HCT116 (cell line): ENCODE measurements at regions of chr1 and their contacts with region 1.

Region 1: GRCh38 chr1:155084722-155085503 is 6.3 kb downstream of the EFNA3 start:
- DNase-seq: peak; percentile 88
- ATAC-seq: peak; percentile 81
- H3K4me3 ChIP-seq: peak overlapping the region; percentile 61 to 67
- H3K27ac ChIP-seq: peak overlapping the region; percentile 67
- H3K4me1 ChIP-seq: peaks cover 29 to 60% of the 10 kb centered on the region in 2 experiments
- H3K27me3 ChIP-seq: no peaks in the 10 kb centered on the region
- CTCF ChIP-seq: peak in 2 of 3 experiments; percentile 86 to 87; a peak in 4 of 6 replicates
- POLR2A ChIP-seq: no peak
- RAD21 ChIP-seq: no peak

Region 2: GRCh38 chr1:154974063-154974807 is 110.7 kb before region 1 on chr1 and contains the start of gene CKS1B:
- CTCF ChIA-PET with region 1: interaction called, 5 read pairs
- POLR2A ChIA-PET with region 1: interaction called, 5 read pairs
- RAD21 ChIA-PET with region 1: interaction called in 1 of 2 experiments, 3 read pairs
- intact Hi-C with region 1: loop called (anchors 1 kb)
- DNase-seq: peak; percentile 100
- ATAC-seq: peak; percentile 78
- H3K4me3 ChIP-seq: peak within 1 kb of the TSS; percentile 61 to 70
- H3K27ac ChIP-seq: peak within 1 kb of the TSS; percentile 86
- H3K4me1 ChIP-seq: peaks cover 40 to 64% of the 10 kb centered on the region in 2 experiments
- H3K27me3 ChIP-seq: no peaks in the 10 kb centered on the region
- CTCF ChIP-seq: no peak
- POLR2A ChIP-seq: no peak
- RAD21 ChIP-seq: no peak
- total RNA-seq, gene CKS1B: 229 TPM

Region 3: DNA sequence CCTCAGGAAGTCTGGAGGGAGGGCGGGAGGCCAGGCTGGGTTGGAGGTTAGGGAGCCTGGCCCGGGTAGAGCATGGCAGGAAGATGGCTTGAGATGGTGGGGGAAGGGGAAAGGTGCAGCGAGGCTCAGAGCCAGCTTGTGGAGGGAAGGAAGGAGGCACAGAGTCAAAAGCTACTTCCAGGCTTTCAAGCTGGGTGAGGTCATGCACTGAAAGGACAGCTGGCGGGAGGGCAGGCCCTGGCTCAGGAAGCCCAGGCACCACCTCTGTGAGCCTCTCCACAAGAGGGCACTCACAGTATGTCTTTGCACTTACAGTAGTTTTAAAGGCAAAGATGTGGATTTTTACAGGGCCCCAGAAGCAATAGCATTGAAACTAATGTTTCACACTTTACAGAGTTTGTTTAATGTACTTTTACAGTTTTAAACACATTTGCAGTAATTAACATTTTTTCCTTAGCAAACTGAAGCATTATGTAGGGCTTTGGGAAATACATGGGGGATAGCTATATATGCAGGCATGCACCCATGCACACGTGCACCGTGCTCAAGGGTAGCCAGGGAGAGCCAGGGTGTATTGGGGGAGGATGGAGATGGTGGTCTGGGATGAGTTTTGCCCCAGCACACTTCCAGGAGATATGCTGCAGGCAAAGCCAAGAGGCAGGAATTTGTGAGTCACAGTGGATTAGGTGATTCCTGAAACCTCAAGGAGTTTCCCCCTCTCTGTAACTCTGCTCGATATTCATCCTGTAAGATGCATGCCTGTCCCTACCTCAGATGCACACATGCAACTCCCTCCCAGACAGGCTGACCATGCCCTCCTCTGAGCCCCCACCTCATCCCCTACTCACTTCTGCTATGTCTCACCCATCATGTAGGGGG is 39.9 kb before region 1 on chr1:
- CTCF ChIA-PET with region 1: interaction called, 32 read pairs
- POLR2A ChIA-PET with region 1: no interaction called
- RAD21 ChIA-PET with region 1: interaction called, 3 to 12 read pairs
- intact Hi-C with region 1: loop called (anchors 1 kb)
- DNase-seq: no peak
- ATAC-seq: peak; percentile 95
- H3K4me3 ChIP-seq: no peak overlapping the region
- H3K27ac ChIP-seq: no peak overlapping the region
- H3K4me1 ChIP-seq: peaks cover 15 to 33% of the 10 kb centered on the region in 2 experiments
- H3K27me3 ChIP-seq: no peaks in the 10 kb centered on the region
- CTCF ChIP-seq: peak in 2 of 3 experiments; percentile 77 to 80; a peak in 4 of 6 replicates
- POLR2A ChIP-seq: no peak
- RAD21 ChIP-seq: no peak

Region 4: DNA sequence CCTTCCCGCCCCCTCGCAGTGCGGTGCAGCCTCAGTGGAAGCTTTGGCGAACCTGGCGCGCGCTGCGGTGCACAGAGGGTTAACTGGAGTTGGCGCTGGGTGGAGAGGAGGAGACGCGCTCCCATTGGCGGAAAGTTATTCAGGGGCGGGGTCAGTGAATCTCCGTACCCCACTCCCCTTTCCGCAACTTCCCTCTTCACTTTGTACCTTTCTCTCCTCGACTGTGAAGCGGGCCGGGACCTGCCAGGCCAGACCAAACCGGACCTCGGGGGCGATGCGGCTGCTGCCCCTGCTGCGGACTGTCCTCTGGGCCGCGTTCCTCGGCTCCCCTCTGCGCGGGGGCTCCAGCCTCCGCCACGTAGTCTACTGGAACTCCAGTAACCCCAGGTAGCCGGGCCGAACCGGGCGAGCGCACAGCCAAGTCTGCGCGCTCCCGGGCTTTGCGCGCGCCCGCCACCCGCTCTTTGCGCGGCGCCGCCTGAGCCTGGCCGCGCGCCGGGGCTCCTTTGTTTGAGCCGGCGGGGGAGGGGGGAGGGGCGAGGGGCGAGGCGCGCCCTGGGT is 21.3 kb before region 1 on chr1 and contains the start of gene EFNA4:
- CTCF ChIA-PET with region 1: interaction called, 44 read pairs
- POLR2A ChIA-PET with region 1: interaction called, 7 read pairs
- RAD21 ChIA-PET with region 1: interaction called in 1 of 2 experiments, 9 read pairs
- intact Hi-C with region 1: loop called (anchors 1 kb)
- DNase-seq: peak; percentile 79
- ATAC-seq: peak; percentile 79
- H3K4me3 ChIP-seq: peak within 1 kb of the TSS; percentile 77 to 84
- H3K27ac ChIP-seq: peak within 1 kb of the TSS; percentile 93
- H3K4me1 ChIP-seq: peaks cover 21 to 35% of the 10 kb centered on the region in 2 experiments
- H3K27me3 ChIP-seq: no peaks in the 10 kb centered on the region
- CTCF ChIP-seq: no peak
- POLR2A ChIP-seq: peak; percentile 76
- RAD21 ChIP-seq: no peak
- total RNA-seq, gene EFNA4: 9.8 TPM

Region 5: DNA sequence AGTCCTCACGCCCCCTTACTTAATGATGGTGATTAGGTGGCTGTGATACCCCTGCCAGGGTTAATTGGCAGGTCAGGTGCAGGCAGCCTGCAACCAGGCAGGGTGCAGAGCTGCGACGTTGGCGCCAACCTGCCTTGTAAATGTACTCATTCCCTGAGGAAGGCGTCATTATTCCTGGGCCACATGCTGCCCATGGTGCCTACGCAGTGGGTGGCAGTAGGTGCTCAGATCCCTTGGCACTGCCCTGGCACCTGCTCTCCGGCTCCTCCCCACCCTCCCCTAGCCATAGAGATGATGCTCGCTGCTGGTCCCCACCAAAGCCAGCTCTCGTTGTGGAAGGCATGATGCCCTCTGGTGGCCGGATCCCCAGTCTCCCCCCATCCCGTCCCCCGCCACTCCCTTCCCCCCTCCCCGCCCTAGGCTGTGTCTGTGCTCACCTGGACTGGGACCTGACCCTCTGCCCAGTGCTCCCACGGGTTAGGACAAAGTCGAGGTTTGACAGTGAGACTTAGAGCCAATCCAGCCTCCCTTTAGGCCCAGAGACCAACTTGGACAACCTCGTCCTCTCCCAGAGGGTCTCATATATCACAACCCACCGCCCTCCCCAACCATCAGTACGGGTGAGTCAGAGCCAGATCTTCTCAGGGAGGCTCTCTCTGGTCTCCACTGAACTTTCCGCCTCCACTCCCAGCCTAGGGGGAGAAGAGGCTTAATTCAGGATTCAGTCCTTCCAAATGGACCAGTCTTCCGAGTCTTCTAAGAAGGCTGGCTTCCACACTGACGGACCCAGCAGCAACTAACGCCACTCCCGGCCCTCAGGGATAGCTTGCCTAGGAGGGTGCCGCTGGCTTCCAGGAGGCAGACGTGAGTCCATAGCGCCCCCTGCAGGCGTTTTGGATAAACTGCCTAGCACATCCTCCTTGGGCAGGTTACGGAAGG is 82.5 kb after region 1 on chr1:
- CTCF ChIA-PET with region 1: interaction called, 163 read pairs
- POLR2A ChIA-PET with region 1: interaction called, 7 read pairs
- RAD21 ChIA-PET with region 1: interaction called, 5 to 7 read pairs
- intact Hi-C with region 1: no loop called
- DNase-seq: peak; percentile 89
- ATAC-seq: peak; percentile 88
- H3K4me3 ChIP-seq: peak overlapping the region; percentile 41 to 59
- H3K27ac ChIP-seq: peak overlapping the region; percentile 48
- H3K4me1 ChIP-seq: peaks cover 9 to 19% of the 10 kb centered on the region in 2 experiments; a peak in 2 of 4 replicates
- H3K27me3 ChIP-seq: no peaks in the 10 kb centered on the region
- CTCF ChIP-seq: peak in 2 of 3 experiments; percentile 88 to 95; a peak in 4 of 6 replicates
- POLR2A ChIP-seq: no peak
- RAD21 ChIP-seq: no peak

Region 6: GRCh38 chr1:155227261-155228095 is 142.6 kb after region 1 on chr1:
- CTCF ChIA-PET with region 1: no interaction called
- POLR2A ChIA-PET with region 1: no interaction called
- RAD21 ChIA-PET with region 1: no interaction called
- intact Hi-C with region 1: no loop called
- DNase-seq: peak; percentile 97
- ATAC-seq: peak; percentile 95
- H3K4me3 ChIP-seq: peak overlapping the region; percentile 63 to 69
- H3K27ac ChIP-seq: peak overlapping the region; percentile 95
- H3K4me1 ChIP-seq: peaks cover 17 to 43% of the 10 kb centered on the region in 2 experiments
- H3K27me3 ChIP-seq: no peaks in the 10 kb centered on the region
- CTCF ChIP-seq: no peak
- POLR2A ChIP-seq: peak; percentile 91
- RAD21 ChIP-seq: no peak